BJ (cell line): ENCODE measurements at regions of chr5 and their contacts with region 1.

Region 1: DNA sequence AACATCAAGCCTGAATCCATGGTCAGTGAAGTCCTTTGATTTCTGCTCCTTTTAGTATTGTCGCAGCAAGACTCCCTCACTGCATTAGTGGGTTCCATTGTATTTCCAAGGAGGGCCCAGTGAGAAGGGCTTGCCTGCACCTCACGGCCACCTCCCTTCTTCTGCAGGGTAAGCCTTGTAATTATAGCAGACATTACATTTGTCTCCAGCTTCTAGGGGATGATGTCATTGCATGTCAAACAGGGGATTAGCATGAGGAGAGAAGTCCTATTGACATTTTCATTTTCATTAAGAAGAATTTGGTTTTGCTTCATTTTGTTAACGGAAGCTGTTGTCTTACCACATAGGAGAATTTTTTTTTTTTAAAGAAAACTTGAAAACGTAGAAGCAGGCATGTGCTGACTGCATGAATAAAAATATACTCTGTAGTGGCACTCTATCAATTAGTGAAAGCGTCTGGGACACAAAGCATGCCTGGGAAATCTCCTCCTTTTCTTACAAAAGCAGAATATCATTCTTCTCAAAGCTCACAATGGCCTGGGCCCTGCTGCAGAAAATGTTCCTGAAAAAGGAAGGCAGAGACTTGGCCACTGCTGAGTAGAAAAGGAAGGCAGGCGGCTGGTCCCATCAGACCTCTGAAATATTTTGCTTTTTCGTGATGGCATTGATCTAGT is 27.1 kb downstream of the MAP1B start:
- DNase-seq: no peak
- H3K4me3 ChIP-seq: no peak overlapping the region
- H3K27me3 ChIP-seq: no peaks in the 10 kb centered on the region
- CTCF ChIP-seq: no peak

Region 2: GRCh38 chr5:72280581-72281170 is 146.3 kb after region 1 on chr5:
- CTCF ChIA-PET with region 1: interaction called, 12 read pairs
- POLR2A ChIA-PET with region 1: no interaction called
- DNase-seq: peak; percentile 17
- H3K4me3 ChIP-seq: no peak overlapping the region
- H3K27me3 ChIP-seq: no peaks in the 10 kb centered on the region
- CTCF ChIP-seq: peak; percentile 70

Region 3: DNA sequence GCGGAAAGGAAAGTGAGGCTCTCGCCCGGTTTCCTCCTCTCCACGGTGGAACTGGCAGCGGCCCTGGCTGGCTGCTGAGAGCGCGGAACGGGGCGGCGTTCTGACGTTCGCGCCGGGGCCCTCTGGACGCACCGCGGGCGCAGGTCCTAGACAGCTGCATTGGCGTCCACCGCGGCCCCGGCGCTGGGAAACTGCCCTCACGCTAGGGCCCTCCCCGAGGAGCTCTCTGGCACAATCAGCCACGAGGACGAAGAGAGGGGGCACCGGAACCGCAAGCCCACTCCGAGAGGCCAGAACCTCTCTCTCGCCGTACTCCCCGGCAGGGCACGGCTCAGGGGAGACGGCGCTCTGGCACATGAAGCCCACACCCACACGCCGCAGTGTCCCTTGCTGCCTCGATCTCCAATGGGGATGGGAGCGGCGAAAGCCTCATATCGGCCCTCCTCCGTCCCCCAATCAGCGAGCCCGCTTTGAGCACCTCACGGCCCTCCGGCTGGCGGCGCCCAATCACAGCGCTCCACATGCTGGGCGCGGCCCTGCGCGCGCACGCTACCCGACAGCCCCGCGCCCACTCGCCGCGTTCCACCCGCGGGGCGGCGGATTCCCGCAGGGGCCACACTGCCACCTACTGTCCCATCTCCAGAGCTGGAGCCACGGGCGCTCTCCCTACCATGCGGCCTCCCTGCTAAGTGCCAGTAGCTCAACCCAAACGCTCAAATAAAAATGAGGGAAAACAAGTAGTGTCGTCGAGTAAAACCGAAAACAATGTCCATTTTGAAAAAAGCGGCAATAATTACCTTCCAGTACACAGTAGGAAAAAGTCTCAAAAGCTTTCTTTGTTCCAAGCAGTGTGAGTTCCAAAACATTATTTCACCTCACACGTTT is 173.8 kb after region 1 on chr5:
- CTCF ChIA-PET with region 1: interaction called, 10 read pairs
- POLR2A ChIA-PET with region 1: interaction called, 4 read pairs
- DNase-seq: peak; percentile 84
- H3K4me3 ChIP-seq: peak overlapping the region; percentile 62
- H3K27me3 ChIP-seq: no peaks in the 10 kb centered on the region
- CTCF ChIP-seq: peak; percentile 81